ENCODE measurements at regions of chr12 and their contacts with region 1.

Region 1: DNA sequence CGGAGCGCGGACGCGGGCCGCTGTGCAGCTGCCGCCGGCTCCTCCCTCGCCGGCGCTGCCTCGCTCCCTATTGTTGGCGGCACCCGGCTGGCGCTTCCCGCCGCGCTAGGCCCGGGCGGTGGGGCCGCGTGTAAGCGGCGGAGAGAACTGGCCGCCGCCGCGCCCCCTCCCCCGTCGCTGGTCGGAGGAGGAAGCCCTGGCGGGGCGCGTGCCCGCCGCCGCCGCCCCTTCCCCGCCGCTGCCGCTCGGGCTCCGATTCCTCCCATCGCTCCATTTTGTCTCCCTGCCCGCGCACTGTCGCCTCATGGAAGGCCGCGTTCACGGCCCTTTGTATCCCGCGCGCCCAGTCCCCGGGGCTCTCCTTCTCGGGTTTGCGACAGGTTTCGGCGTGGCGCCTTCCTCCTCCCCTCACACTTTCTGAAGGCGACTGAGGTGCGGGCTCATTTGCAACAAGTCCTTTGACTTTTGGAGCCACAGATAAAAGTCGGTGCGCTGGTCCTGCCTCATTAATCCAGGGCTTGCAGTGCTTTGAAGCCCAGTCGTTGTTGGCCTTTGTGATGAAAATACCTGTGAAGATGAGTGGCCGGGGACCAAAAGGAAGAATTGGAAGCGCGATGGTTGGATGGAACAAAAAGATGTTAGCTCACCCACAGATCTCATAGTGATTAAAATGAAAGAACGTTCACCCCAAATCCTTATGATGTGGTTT is 707 bp downstream of the CPSF6 start:
- DNase-seq: peak; percentile 29
- ATAC-seq: peak; percentile 48
- H3K4me3 ChIP-seq: peak overlapping the region; percentile 100
- H3K27ac ChIP-seq: peak overlapping the region; percentile 28
- H3K4me1 ChIP-seq: peaks cover 13% of the 10 kb centered on the region
- H3K27me3 ChIP-seq: no peaks in the 10 kb centered on the region
- CTCF ChIP-seq: no peak

Region 2: GRCh38 chr12:69266036-69266635 is 26.1 kb after region 1 on chr12:
- CTCF ChIA-PET with region 1: interaction called, 6 read pairs
- POLR2A ChIA-PET with region 1: interaction called, 10 read pairs
- intact Hi-C with region 1: no loop called
- DNase-seq: peak; percentile 70
- ATAC-seq: peak; percentile 99
- H3K4me3 ChIP-seq: no peak overlapping the region
- H3K27ac ChIP-seq: peak overlapping the region; percentile 21
- H3K4me1 ChIP-seq: peaks cover 18% of the 10 kb centered on the region
- H3K27me3 ChIP-seq: no peaks in the 10 kb centered on the region
- CTCF ChIP-seq: no peak

Region 3: GRCh38 chr12:69290545-69291277 is 50.6 kb after region 1 on chr12:
- CTCF ChIA-PET with region 1: no interaction called
- POLR2A ChIA-PET with region 1: no interaction called
- intact Hi-C with region 1: no loop called
- DNase-seq: peak; percentile 90
- ATAC-seq: peak; percentile 100
- H3K4me3 ChIP-seq: no peak overlapping the region
- H3K27ac ChIP-seq: no peak overlapping the region
- H3K4me1 ChIP-seq: no peaks in the 10 kb centered on the region
- H3K27me3 ChIP-seq: peaks cover 3% of the 10 kb centered on the region; the same call in 1 of the 2 replicates
- CTCF ChIP-seq: peak; percentile 96